HCT116 (cell line): ENCODE measurements at regions of chr5 and their contacts with region 1.

Region 1: DNA sequence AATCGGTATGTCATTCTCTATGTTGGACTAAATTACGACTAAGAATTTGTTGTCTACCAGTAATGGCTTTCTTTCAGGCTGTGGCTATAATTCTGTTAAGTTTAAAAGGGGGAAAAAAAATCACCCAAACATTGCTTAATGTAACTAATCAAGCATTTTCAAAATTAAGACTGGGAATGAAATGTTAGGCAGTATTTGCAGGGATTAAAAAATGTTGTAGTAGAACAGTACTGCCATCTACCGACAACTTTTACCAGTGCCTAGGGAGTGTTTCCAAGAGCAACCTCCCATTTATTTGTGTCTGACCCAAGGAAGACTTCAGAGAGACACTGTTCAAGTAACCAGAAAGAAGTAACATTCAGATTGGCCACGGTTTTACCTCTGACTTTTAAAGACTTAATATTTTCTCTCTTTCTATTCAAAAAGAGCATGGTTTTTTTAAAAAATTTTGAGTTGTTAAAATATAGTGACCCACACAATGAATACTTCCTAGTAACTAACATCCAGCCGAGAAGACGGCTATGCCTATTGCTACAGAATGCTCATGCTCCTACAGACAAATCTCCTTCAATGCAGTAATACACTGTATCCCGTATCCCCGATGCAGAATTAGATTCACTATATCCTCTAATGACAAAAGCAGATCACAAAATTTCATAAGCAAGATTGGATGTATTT is 92.4 kb downstream of the ARL15 start:
- DNase-seq: peak; percentile 39
- ATAC-seq: peak; percentile 83
- H3K4me3 ChIP-seq: no peak overlapping the region
- H3K27ac ChIP-seq: no peak overlapping the region
- H3K4me1 ChIP-seq: no peaks in the 10 kb centered on the region
- H3K27me3 ChIP-seq: no peaks in the 10 kb centered on the region
- CTCF ChIP-seq: peak; percentile 50 to 76 (median 64); a peak in 5 of 6 replicates
- POLR2A ChIP-seq: no peak
- RAD21 ChIP-seq: peak; percentile 76

Region 2: DNA sequence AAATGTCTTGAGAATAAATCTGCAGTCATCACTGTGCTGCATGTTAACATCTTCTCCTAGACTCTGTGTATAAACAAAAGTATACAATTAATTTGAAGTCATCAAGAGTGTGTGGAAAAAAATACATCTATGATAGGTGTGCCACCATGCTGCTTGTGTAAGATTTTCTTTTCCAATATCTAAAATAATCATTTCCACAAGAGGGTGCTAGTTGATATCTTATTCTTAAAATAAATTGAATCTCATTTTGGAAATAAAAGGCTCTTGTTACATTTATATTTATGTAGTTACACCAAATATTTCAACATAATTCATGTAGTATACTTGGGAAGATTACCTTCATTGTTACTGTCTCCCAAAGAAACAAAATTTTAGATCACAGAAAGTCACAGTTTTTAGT is 1094.3 kb before region 1 on chr5:
- CTCF ChIA-PET with region 1: no interaction called
- POLR2A ChIA-PET with region 1: no interaction called
- RAD21 ChIA-PET with region 1: no interaction called
- intact Hi-C with region 1: loop called (anchors 2 kb)
- DNase-seq: no peak
- ATAC-seq: no peak
- H3K4me3 ChIP-seq: no peak overlapping the region
- H3K27ac ChIP-seq: no peak overlapping the region
- H3K4me1 ChIP-seq: peaks cover 0 to 3% of the 10 kb centered on the region in 2 experiments; a peak in 1 of 4 replicates
- H3K27me3 ChIP-seq: no peaks in the 10 kb centered on the region
- CTCF ChIP-seq: peak in 1 of 3 experiments; percentile 32; a peak in 1 of 6 replicates
- POLR2A ChIP-seq: no peak
- RAD21 ChIP-seq: peak; percentile 45

Region 3: DNA sequence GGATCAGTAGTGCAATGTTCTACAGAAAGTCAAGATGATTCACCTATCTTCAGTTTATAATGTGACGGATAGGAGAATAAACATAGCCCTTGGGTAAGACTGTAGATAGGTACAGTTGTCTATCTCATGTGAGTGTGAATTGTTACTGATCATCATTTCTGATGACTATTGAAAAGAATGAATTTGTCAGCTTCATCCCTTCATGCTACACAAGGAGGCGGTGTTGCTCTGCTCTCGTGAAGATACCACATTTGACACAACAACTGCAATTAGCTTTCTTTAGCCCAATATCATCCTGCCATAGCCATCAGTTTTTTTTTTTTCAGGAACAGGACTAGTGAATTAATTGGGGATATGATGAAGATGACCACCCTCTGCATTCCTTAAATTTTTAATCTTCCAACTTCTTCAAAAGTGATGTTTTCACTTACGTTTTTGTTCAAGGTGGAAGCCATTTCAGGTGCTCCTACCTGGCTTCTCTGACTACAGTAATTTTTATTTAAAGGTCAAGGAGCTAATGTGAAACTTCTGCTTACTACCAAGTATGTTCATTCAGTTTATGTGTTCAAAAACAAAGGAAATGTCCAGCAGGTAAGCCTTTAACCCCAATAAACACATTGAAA is 955.5 kb before region 1 on chr5:
- CTCF ChIA-PET with region 1: no interaction called
- POLR2A ChIA-PET with region 1: no interaction called
- RAD21 ChIA-PET with region 1: no interaction called
- intact Hi-C with region 1: loop called (anchors 2 kb)
- DNase-seq: peak; percentile 8
- ATAC-seq: peak; percentile 49; the same call in 1 of the 2 replicates
- H3K4me3 ChIP-seq: no peak overlapping the region
- H3K27ac ChIP-seq: no peak overlapping the region
- H3K4me1 ChIP-seq: no peaks in the 10 kb centered on the region
- H3K27me3 ChIP-seq: no peaks in the 10 kb centered on the region
- CTCF ChIP-seq: peak; percentile 35 to 67 (median 54); a peak in 5 of 6 replicates
- POLR2A ChIP-seq: no peak
- RAD21 ChIP-seq: peak; percentile 68

Region 4: GRCh38 chr5:53481887-53482716 is 735.9 kb before region 1 on chr5:
- CTCF ChIA-PET with region 1: no interaction called
- POLR2A ChIA-PET with region 1: interaction called, 4 read pairs
- RAD21 ChIA-PET with region 1: interaction called in 1 of 2 experiments, 3 read pairs
- intact Hi-C with region 1: loop called (anchors 5 kb)
- DNase-seq: peak; percentile 32
- ATAC-seq: peak; percentile 73
- H3K4me3 ChIP-seq: peak overlapping the region; percentile 53 to 59
- H3K27ac ChIP-seq: no peak overlapping the region
- H3K4me1 ChIP-seq: peaks cover 0 to 31% of the 10 kb centered on the region in 2 experiments; a peak in 3 of 4 replicates
- H3K27me3 ChIP-seq: peaks cover 13% of the 10 kb centered on the region; the same call in 1 of the 2 replicates
- CTCF ChIP-seq: peak in 1 of 3 experiments; percentile 17; a peak in 2 of 6 replicates
- POLR2A ChIP-seq: no peak
- RAD21 ChIP-seq: no peak

Region 5: DNA sequence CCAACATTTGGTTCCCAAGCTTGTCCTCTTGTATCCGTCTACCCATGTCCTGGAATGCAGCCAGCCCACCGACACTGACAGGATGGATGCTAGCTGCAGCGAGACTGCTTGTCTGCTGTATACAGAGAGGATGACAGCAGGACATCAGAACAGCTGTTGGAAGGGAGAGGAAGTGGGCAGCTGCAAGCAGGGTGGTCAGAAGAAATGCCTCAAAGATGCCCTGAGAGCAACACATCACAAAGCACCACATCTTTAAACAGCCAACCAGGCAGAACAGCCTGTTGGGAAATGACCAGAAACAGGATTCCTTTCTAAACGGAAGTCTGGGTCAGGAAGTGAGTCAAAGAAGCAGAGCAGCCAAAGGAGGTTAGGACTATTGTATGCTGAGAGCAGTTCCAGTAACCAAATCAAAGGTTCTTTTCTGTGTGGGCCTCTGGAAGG is 438.4 kb before region 1 on chr5:
- CTCF ChIA-PET with region 1: no interaction called
- POLR2A ChIA-PET with region 1: no interaction called
- RAD21 ChIA-PET with region 1: no interaction called
- intact Hi-C with region 1: no loop called
- DNase-seq: no peak
- ATAC-seq: no peak
- H3K4me3 ChIP-seq: no peak overlapping the region
- H3K27ac ChIP-seq: no peak overlapping the region
- H3K4me1 ChIP-seq: no peaks in the 10 kb centered on the region
- H3K27me3 ChIP-seq: no peaks in the 10 kb centered on the region
- CTCF ChIP-seq: no peak
- POLR2A ChIP-seq: no peak
- RAD21 ChIP-seq: no peak